CD8-positive, alpha-beta T cell (primary cell): ENCODE measurements at regions of chr1 and their contacts with region 1.

Region 1: DNA sequence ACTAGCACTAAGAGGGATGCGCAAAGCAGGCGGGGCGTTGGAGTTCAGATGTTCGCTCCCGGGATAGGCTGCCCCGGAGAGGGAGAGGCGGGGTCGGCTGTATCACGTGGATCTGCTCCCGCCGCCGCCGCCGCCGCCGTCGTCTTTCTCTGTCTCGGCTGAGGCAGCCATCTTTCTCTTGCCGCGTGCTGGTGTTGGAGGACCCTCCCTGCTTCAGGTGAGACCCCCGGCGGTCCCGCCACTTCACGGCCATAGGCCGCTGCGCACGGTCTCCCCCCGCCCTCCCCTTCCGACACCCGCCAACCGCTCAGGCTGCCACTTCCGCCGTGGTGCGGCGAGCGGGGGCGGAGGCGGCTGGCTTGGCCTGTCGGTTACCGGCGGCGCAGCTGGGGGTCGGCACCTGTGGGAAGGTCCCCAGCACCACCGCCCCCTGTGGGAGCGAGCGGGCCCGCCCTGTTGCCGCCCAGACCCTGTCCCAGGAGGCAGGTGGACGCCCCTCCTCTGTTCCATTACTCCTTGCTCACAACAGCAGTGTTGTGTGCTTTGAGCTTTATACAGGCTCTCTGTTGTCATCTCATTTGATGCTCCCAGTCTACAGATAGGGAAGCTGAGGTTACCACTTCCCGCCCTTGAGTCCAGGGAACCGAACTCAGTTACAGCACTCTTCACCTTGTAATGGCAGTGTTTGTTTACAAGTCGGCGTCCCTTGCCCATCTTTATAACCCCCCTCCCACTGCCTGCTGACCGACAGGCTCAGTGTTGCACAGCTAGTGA is at the start of gene BTF3L4:
- DNase-seq: peak; percentile 85 to 95 (median 92)
- ATAC-seq: peak; percentile 92
- H3K4me3 ChIP-seq: peak within 1 kb of the TSS; percentile 79 to 96
- H3K4me3 Mint-ChIP-seq: peak within 1 kb of the TSS; percentile 98
- H3K27ac ChIP-seq: peak within 1 kb of the TSS; percentile 74 to 85
- H3K27ac Mint-ChIP-seq: peak within 1 kb of the TSS; percentile 93
- H3K4me1 ChIP-seq: peaks cover 33% of the 10 kb centered on the region
- H3K4me1 Mint-ChIP-seq: peaks cover 70% of the 10 kb centered on the region
- H3K27me3 ChIP-seq: no peaks in the 10 kb centered on the region
- H3K27me3 Mint-ChIP-seq: no peaks in the 10 kb centered on the region
- CTCF ChIP-seq: no peak
- total RNA-seq, gene BTF3L4: 38.4 to 39.7 TPM

Region 2: DNA sequence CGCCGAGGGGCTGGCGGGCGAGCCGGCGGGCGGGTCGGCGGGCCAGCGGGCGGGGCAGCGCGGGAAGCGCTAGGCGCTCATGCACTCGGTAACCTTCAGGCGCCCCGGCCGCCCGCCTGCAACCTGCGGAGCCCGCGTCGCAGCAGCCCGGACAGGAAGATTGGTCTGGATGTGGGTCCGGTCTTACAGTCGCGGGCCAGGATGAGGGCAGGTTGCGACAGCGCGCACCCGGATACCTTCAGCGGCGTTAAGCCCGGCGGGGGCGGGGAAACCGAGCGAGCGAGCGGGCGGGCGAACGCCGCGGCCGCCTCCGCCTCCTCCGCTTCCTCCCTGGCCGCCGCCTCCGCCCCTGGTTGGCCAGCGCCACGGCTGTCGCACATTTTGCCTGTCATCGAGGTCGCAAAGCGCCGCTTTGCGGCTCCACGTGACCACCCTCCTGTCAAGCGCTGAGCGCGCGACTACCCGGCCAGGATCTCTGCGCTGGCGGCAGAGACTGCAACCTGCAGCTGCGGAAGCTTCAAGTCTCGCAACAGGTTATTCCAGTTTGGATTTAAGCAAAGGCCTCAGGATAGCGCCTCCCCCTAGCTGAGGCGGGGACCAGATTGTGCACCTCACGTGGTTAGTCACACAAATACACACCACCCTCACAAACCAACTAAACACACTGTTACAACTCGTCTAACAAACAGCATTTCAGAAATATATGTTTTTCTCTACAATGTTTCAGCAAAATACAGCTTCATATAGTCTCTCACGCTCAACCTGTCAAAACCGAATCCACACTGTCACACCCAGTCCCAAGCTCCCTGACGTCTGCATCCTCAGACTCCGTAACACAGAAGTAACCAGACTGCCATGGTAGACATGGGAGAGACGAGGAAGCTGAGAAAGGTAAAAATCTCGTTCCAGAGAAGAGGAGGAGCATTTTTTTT is 1096.2 kb before region 1 on chr1 and contains the start of gene FAF1:
- CTCF ChIA-PET with region 1: no interaction called
- POLR2A ChIA-PET with region 1: no interaction called
- intact Hi-C with region 1: loop called (anchors 10 kb)
- DNase-seq: peak; percentile 96 to 99 (median 98)
- ATAC-seq: peak; percentile 82
- H3K4me3 ChIP-seq: peak within 1 kb of the TSS; percentile 69 to 82
- H3K4me3 Mint-ChIP-seq: peak within 1 kb of the TSS; percentile 94
- H3K27ac ChIP-seq: peak within 1 kb of the TSS; percentile 74 to 77
- H3K27ac Mint-ChIP-seq: peak within 1 kb of the TSS; percentile 92
- H3K4me1 ChIP-seq: peaks cover 12% of the 10 kb centered on the region
- H3K4me1 Mint-ChIP-seq: peaks cover 31% of the 10 kb centered on the region
- H3K27me3 ChIP-seq: no peaks in the 10 kb centered on the region
- H3K27me3 Mint-ChIP-seq: no peaks in the 10 kb centered on the region
- CTCF ChIP-seq: no peak
- total RNA-seq, gene FAF1: 39.0 to 44.0 TPM

Region 3: GRCh38 chr1:51990478-51990965 is 65.8 kb before region 1 on chr1 and contains the start of gene RAB3B:
- CTCF ChIA-PET with region 1: no interaction called
- POLR2A ChIA-PET with region 1: no interaction called
- intact Hi-C with region 1: loop called in 1 of 2 experiments (anchors 2 kb)
- DNase-seq: peak; percentile 57 to 83 (median 73)
- ATAC-seq: peak; percentile 97
- H3K4me3 ChIP-seq: peak within 1 kb of the TSS; percentile 36 to 44
- H3K4me3 Mint-ChIP-seq: peak within 1 kb of the TSS; percentile 90
- H3K27ac ChIP-seq: no peak within 1 kb of the TSS
- H3K27ac Mint-ChIP-seq: peak within 1 kb of the TSS; percentile 27
- H3K4me1 ChIP-seq: peaks cover 7% of the 10 kb centered on the region
- H3K4me1 Mint-ChIP-seq: peaks cover 14% of the 10 kb centered on the region
- H3K27me3 ChIP-seq: peaks cover 0 to 19% of the 10 kb centered on the region in 2 experiments
- H3K27me3 Mint-ChIP-seq: peaks cover 25% of the 10 kb centered on the region
- CTCF ChIP-seq: no peak
- total RNA-seq, gene RAB3B: not detected

Region 4: DNA sequence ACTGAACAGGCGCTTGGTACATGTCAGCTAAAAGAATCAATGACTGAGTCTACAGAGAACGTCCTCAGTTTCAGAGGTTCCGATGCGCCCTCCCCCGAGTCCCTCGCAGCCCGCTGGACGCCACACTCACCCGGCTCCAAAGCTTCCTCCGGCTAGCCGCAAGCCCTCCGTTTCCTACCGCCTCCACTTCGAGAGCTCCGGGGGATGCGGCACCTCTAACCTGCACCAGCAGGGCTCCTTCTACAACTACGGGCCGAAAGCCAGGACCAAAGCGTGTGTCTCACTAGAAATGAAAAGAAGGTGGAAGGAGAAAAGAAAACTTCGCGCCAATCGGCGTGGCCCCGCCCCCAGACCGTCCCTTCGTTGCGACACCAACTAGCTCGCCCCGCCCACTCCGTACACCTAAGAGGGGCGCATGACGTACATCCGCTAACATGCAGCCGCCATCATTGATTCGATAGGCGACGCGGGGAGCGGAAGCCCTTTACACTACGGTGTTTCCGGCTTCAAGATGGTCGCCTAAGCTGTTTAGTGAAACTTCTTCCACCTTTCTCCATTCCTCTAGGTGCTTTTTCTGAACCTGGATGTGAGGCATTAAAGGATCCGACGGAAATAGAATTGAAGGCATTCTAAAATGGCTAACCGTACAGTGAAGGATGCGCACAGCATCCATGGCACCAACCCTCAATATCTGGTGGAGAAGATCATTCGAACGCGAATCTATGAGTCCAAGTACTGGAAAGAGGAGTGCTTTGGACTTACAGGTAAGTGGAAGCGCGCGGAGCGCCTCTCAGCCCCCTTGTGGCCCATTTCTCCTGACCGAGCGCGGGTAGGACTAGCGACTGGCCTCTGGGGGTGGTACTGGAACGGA is 348.0 kb after region 1 on chr1 and contains the starts of genes ORC1 and PRPF38A:
- CTCF ChIA-PET with region 1: no interaction called
- POLR2A ChIA-PET with region 1: no interaction called
- intact Hi-C with region 1: loop called (anchors 1 to 5 kb)
- DNase-seq: peak; percentile 94 to 99 (median 98)
- ATAC-seq: peak; percentile 92
- H3K4me3 ChIP-seq: peak within 1 kb of the TSS; percentile 87 to 92
- H3K4me3 Mint-ChIP-seq: peak within 1 kb of the TSS; percentile 99
- H3K27ac ChIP-seq: peak within 1 kb of the TSS; percentile 96
- H3K27ac Mint-ChIP-seq: peak within 1 kb of the TSS; percentile 98
- H3K4me1 ChIP-seq: peaks cover 26% of the 10 kb centered on the region
- H3K4me1 Mint-ChIP-seq: peaks cover 42% of the 10 kb centered on the region
- H3K27me3 ChIP-seq: no peaks in the 10 kb centered on the region
- H3K27me3 Mint-ChIP-seq: no peaks in the 10 kb centered on the region
- CTCF ChIP-seq: no peak
- total RNA-seq, gene ORC1: 1.2 to 1.3 TPM
- total RNA-seq, gene PRPF38A: 52.2 to 62.0 TPM

Region 5: DNA sequence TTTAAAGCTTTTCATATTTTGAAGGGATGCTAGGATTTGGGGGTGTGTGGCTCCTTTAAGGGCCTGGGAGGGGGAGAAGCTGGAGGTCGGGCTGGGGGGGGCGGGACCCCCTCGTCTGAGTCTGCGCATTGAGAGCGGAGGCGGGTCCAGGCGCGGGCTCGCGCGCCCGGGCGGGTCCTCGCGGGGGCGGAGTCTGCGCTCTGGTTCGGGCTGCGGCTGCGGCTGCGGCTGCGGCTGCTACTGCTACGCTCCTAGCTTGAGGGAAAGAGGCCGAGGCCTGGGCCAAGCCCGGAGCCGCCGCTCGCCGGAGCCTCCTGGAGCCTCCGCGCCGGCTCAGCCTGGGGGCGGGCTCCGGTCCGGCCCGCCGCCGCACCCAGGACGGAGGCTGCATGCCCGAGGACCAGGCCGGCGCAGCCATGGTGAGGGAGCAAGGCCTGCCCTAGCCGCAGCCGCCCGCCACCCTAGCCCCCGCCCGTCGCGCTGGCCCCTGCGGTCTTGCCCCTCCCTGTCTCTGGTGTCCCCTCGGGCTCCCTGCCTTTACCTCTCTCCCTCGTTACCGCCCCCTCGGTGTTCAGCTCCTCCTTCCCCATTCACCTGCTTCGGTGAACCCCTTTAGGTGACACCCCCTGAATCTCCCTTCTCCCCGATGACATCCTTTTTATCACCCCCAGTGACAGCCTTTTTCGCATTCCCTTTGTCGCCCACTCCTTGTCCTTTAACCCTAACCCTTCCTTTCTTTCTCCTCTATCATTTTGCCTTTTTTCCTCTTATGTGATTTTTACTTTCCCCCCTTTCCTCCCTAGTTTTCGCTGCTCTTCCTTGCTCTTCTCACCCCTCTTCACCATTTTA is 670.1 kb after region 1 on chr1 and contains the start of gene ZYG11B:
- CTCF ChIA-PET with region 1: no interaction called
- POLR2A ChIA-PET with region 1: no interaction called
- intact Hi-C with region 1: loop called in 1 of 2 experiments (anchors 10 kb)
- DNase-seq: peak; percentile 80 to 95 (median 89)
- ATAC-seq: peak; percentile 89
- H3K4me3 ChIP-seq: peak within 1 kb of the TSS; percentile 56 to 72
- H3K4me3 Mint-ChIP-seq: peak within 1 kb of the TSS; percentile 90
- H3K27ac ChIP-seq: peak within 1 kb of the TSS; percentile 37 to 48
- H3K27ac Mint-ChIP-seq: peak within 1 kb of the TSS; percentile 84
- H3K4me1 ChIP-seq: peaks cover 16% of the 10 kb centered on the region
- H3K4me1 Mint-ChIP-seq: peaks cover 42% of the 10 kb centered on the region
- H3K27me3 ChIP-seq: peaks cover 0 to 3% of the 10 kb centered on the region in 2 experiments
- H3K27me3 Mint-ChIP-seq: peaks cover 3% of the 10 kb centered on the region
- CTCF ChIP-seq: no peak
- total RNA-seq, gene ZYG11B: 9.8 to 10.4 TPM

Region 6: DNA sequence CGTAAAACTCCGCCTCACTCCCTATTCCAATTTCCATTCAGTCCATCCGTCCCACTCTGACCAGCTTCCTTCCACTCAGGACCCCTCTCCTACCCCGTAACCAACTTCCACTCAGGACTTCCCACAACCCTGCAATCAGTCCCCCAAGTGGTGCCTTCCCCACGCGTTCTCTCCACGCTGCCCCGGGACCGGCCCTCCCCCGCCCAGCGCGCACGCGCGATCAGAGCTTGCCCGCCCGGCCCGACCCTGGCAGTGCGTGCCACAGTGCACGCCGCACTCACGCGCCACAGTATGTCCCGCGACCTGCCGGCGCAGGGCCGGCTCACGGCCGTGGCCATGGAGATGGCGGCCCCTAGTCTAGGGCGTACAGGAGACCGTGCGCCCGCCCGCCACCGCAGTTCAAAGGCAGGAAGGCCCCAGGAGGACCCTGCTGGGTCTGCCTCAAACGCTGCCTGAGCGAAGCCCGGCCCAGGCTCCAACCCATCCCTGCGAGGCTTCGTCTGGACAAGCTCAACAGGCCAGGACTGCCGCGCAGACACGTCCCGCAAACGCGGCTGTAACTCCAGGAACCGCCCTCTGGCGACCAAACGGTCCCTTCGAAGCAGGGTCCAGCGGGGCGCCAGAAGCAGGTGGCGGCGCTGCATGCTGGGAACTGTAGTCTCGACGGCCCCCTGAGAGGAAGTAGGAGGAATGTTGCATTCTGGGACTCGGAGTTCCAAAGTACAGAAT is 1781.7 kb after region 1 on chr1 and contains the start of gene NDC1:
- CTCF ChIA-PET with region 1: no interaction called
- POLR2A ChIA-PET with region 1: no interaction called
- intact Hi-C with region 1: loop called in 1 of 2 experiments (anchors 10 kb)
- DNase-seq: peak; percentile 77 to 96 (median 88)
- ATAC-seq: peak; percentile 90
- H3K4me3 ChIP-seq: peak within 1 kb of the TSS; percentile 82 to 93
- H3K4me3 Mint-ChIP-seq: peak within 1 kb of the TSS; percentile 91
- H3K27ac ChIP-seq: peak within 1 kb of the TSS; percentile 91 to 100
- H3K27ac Mint-ChIP-seq: peak within 1 kb of the TSS; percentile 98
- H3K4me1 ChIP-seq: peaks cover 16% of the 10 kb centered on the region
- H3K4me1 Mint-ChIP-seq: peaks cover 26% of the 10 kb centered on the region
- H3K27me3 ChIP-seq: no peaks in the 10 kb centered on the region
- H3K27me3 Mint-ChIP-seq: peaks cover 3% of the 10 kb centered on the region
- CTCF ChIP-seq: no peak
- total RNA-seq, gene NDC1: 6.1 to 6.6 TPM